Psoas muscle (tissue), 8 donors: ENCODE measurements at regions of chr9 and their contacts with region 1.

Region 1: GRCh38 chr9:124420991-124421543 is 5.8 kb upstream of the PSMB7 start:
- DNase-seq: no peak
- ATAC-seq: no peak
- H3K4me3 ChIP-seq: no peak overlapping the region
- H3K27ac ChIP-seq: no peak overlapping the region
- H3K4me1 ChIP-seq: no peaks in the 10 kb centered on the region
- H3K27me3 ChIP-seq: no peaks in the 10 kb centered on the region
- CTCF ChIP-seq: no peak

Region 2: DNA sequence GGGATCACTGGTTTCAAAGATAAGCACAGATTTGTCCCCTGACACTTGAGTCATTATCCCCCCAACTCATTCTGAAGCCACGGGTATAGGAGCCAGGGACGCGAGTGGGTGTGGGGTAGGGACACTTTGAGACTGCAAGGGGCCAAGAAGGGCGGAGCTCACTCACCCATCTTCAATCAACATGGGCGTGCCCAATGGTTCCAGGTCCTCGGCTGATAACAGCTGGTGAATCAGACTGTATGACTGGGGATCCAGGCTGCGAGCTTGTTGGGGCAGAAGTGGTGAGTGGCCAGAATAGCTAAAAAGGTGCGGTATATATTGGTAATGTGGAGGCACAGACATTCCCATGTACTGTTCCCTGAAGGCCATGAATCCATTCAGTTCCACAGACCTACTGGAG is 116.9 kb after region 1 on chr9:
- intact Hi-C with region 1: loop called in 1 of 2 experiments (anchors 5 kb)
- DNase-seq: no peak
- ATAC-seq: no peak
- H3K4me3 ChIP-seq: no peak overlapping the region
- H3K27ac ChIP-seq: no peak overlapping the region
- H3K4me1 ChIP-seq: no peaks in the 10 kb centered on the region
- H3K27me3 ChIP-seq: no peaks in the 10 kb centered on the region
- CTCF ChIP-seq: no peak